Activated CD4-positive, alpha-beta memory T cell treated with anti-CD3 and anti-CD28 coated beads for 36 hours (primary cell): ENCODE measurements at regions of chr3 and their contacts with region 1.

Region 1: GRCh38 chr3:160413613-160414248 is 14.3 kb downstream of the SMC4 start:
- DNase-seq: peak; percentile 71
- H3K4me3 Mint-ChIP-seq: no peak overlapping the region
- H3K27ac Mint-ChIP-seq: peak overlapping the region; percentile 33
- H3K4me1 Mint-ChIP-seq: peaks cover 16% of the 10 kb centered on the region
- H3K27me3 Mint-ChIP-seq: no peaks in the 10 kb centered on the region

Region 2: DNA sequence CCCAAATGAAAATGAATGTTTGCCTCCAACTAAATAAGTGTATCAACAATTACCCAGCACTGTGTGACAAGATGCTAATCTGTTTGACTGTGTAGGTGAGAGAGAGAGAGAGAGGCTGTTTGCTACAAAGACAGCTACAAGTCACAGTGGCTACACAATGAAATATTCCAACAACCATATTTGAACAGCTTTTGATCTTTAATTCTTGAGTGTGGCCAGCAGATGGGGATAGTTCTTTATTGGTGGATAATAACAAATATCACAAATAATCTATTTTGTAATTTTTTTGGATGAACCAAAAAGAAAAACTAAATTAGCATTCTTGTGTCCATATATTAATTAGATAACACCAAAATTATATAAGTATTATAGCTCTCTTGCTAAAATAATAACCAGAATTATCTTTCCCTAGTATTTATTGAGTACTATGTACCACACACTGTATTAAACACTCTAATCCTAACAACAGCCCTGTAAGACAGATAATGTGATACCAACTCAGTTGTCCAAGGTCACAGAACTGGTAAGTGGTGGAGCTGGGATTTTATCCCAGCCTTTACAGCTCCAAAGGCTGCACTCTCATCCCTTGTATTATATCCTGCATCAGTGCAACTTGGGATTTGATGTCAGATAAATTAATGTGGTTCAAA is 250.4 kb before region 1 on chr3:
- CTCF ChIA-PET with region 1: interaction called, 4 read pairs
- POLR2A ChIA-PET with region 1: no interaction called
- intact Hi-C with region 1: loop called (anchors 1 kb)
- DNase-seq: no peak
- H3K4me3 Mint-ChIP-seq: no peak overlapping the region
- H3K27ac Mint-ChIP-seq: no peak overlapping the region
- H3K4me1 Mint-ChIP-seq: no peaks in the 10 kb centered on the region
- H3K27me3 Mint-ChIP-seq: peaks cover 3% of the 10 kb centered on the region

Region 3: GRCh38 chr3:160260587-160261270 is 153.0 kb before region 1 on chr3:
- CTCF ChIA-PET with region 1: no interaction called
- POLR2A ChIA-PET with region 1: no interaction called
- intact Hi-C with region 1: no loop called
- DNase-seq: no peak
- H3K4me3 Mint-ChIP-seq: no peak overlapping the region
- H3K27ac Mint-ChIP-seq: no peak overlapping the region
- H3K4me1 Mint-ChIP-seq: no peaks in the 10 kb centered on the region
- H3K27me3 Mint-ChIP-seq: no peaks in the 10 kb centered on the region

Region 4: GRCh38 chr3:160434071-160434470 is 20.3 kb after region 1 on chr3:
- CTCF ChIA-PET with region 1: interaction called, 12 read pairs
- POLR2A ChIA-PET with region 1: interaction called, 3 read pairs
- intact Hi-C with region 1: no loop called
- DNase-seq: no peak
- H3K4me3 Mint-ChIP-seq: no peak overlapping the region
- H3K27ac Mint-ChIP-seq: no peak overlapping the region
- H3K4me1 Mint-ChIP-seq: peaks cover 32% of the 10 kb centered on the region
- H3K27me3 Mint-ChIP-seq: no peaks in the 10 kb centered on the region